ENCODE measurements at regions of chr10 and their contacts with region 1.

Region 1: GRCh38 chr10:93680412-93681047 is 21.9 kb downstream of the FRA10AC1 start:
- DNase-seq: peak in 3 of 4 experiments; percentile 6 to 14 (median 7)
- ATAC-seq: no peak
- H3K4me3 ChIP-seq: no peak overlapping the region
- H3K27ac ChIP-seq: no peak overlapping the region
- H3K4me1 ChIP-seq: no peaks in the 10 kb centered on the region
- H3K27me3 ChIP-seq: no peaks in the 10 kb centered on the region
- CTCF ChIP-seq: peak in 1 of 3 experiments; percentile 45; a peak in 3 of 6 replicates
- EP300 ChIP-seq: no peak
- POLR2A ChIP-seq: no peak
- RAD21 ChIP-seq: peak; percentile 47 to 59

Region 2: GRCh38 chr10:93554760-93555432 is 125.6 kb before region 1 on chr10:
- CTCF ChIA-PET with region 1: interaction called, 8 read pairs
- POLR2A ChIA-PET with region 1: no interaction called
- in situ Hi-C with region 1: no loop called
- intact Hi-C with region 1: loop called (anchors 5 kb)
- DNase-seq: peak; percentile 66 to 80 (median 70)
- ATAC-seq: peak; percentile 97
- H3K4me3 ChIP-seq: no peak overlapping the region
- H3K27ac ChIP-seq: peak overlapping the region; percentile 42; the same call in 2 of the 3 replicates
- H3K4me1 ChIP-seq: peaks cover 0 to 11% of the 10 kb centered on the region in 2 experiments; a peak in 3 of 5 replicates
- H3K27me3 ChIP-seq: peaks cover 0 to 8% of the 10 kb centered on the region in 2 experiments; a peak in 1 of 5 replicates
- CTCF ChIP-seq: peak; percentile 61 to 81 (median 63)
- EP300 ChIP-seq: no peak
- POLR2A ChIP-seq: no peak
- RAD21 ChIP-seq: peak in 1 of 2 experiments; percentile 67; a peak in 3 of 4 replicates

Region 3: DNA sequence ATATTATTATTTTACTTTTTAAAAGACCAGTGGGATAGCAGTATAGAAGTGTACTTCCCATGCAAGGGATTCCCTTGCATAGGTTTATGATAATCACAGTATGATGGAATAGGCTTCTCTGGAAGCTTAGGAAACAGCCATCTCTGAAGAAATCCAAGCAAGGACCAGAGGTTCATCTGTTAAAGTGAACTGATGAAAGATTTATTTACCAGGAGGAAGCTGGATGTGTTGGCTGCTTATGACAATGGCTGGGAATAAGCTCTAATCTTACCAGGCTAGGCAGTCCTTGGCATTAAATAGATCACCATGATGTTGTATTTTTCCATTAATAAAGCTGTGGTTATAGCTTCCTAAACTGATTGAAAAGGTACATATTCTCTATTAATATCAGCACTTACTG is 10.2 kb before region 1 on chr10:
- CTCF ChIA-PET with region 1: no interaction called
- POLR2A ChIA-PET with region 1: no interaction called
- in situ Hi-C with region 1: no loop called
- intact Hi-C with region 1: no loop called
- DNase-seq: no peak
- ATAC-seq: no peak
- H3K4me3 ChIP-seq: no peak overlapping the region
- H3K27ac ChIP-seq: no peak overlapping the region
- H3K4me1 ChIP-seq: no peaks in the 10 kb centered on the region
- H3K27me3 ChIP-seq: no peaks in the 10 kb centered on the region
- CTCF ChIP-seq: no peak
- EP300 ChIP-seq: no peak
- POLR2A ChIP-seq: no peak
- RAD21 ChIP-seq: no peak

Region 4: DNA sequence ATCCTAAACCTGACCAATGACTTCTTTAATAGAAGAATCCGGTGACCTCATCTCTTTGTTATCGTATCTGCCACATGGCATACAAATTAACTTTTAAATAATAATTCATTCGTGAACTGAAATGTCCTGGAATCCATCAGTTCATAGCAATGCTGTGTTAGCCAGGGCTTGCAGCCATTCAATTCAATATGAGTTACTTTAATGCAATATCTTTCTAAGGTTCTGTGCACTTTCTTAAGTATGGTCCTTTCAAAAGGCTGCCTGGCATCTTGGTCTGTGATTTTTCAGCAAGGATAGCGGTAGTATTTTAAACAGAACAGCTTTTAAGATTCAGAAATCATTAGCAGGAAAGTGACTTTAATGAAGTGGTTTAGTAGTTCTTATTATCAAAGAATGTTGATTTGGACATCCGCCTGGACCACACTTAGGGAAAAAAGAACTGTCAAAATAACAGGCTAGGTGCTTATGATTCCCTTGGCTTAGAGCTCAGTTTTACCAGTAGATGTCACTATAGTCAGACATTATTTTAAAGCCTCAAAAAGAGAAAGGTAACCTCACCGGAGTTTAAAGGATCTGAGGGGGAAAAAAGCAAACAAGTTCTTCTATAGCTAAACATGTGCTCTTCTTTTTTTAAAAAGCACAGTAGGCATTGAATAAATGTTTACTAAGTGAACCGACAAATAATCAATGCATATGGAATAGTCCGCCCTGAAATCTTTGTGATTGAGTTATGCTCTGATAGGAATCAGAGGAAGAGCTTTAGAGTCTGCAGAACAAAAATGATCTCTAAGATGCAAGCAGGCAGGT is 235.9 kb after region 1 on chr10:
- CTCF ChIA-PET with region 1: no interaction called
- POLR2A ChIA-PET with region 1: no interaction called
- in situ Hi-C with region 1: no loop called
- intact Hi-C with region 1: no loop called
- DNase-seq: no peak
- ATAC-seq: no peak
- H3K4me3 ChIP-seq: no peak overlapping the region
- H3K27ac ChIP-seq: no peak overlapping the region
- H3K4me1 ChIP-seq: no peaks in the 10 kb centered on the region
- H3K27me3 ChIP-seq: no peaks in the 10 kb centered on the region
- CTCF ChIP-seq: peak in 2 of 3 experiments; percentile 14 to 37; a peak in 3 of 6 replicates
- EP300 ChIP-seq: no peak
- POLR2A ChIP-seq: no peak
- RAD21 ChIP-seq: peak; percentile 11 to 39; a peak in 2 of 4 replicates

Measured in K562 (cell line).